Panc1 (cell line): ENCODE measurements at regions of chr20 and their contacts with region 1.

Region 1: DNA sequence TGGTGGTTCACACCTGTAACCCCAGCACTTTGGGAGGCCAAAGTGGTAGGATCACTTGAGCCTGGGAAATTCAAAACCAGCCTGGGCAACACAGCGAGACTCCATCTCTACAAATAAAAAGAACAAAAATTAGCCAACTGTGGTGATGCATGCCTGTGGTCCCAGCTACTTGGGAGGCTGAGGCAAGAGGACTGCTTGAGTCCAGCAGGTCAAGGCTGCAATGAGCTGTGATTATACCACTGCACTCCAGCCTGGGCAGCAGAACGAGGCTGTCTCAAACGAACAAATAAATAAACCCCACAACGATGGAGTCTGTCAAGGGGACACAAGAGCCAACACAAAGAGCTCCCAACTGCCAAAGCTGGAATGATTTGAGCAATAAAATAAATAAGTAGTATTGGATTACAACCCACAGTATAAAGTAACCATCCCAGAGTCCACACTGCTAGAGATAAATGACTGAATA is 13.5 kb downstream of the ZMYND8 start:
- DNase-seq: no peak
- ATAC-seq: peak; percentile 33; the same call in 1 of the 2 replicates
- H3K4me3 ChIP-seq: no peak overlapping the region
- H3K27ac ChIP-seq: peak overlapping the region; percentile 100
- H3K4me1 ChIP-seq: peaks cover 57% of the 10 kb centered on the region
- H3K27me3 ChIP-seq: no peaks in the 10 kb centered on the region
- CTCF ChIP-seq: no peak

Region 2: GRCh38 chr20:47355489-47356219 is 12.6 kb after region 1 on chr20:
- CTCF ChIA-PET with region 1: interaction called, 8 read pairs
- POLR2A ChIA-PET with region 1: interaction called, 19 read pairs
- in situ Hi-C with region 1: no loop called
- intact Hi-C with region 1: no loop called
- DNase-seq: no peak
- ATAC-seq: no peak
- H3K4me3 ChIP-seq: peak overlapping the region; percentile 28 to 36
- H3K27ac ChIP-seq: peak overlapping the region; percentile 100
- H3K4me1 ChIP-seq: peaks cover 100% of the 10 kb centered on the region
- H3K27me3 ChIP-seq: no peaks in the 10 kb centered on the region
- CTCF ChIP-seq: no peak